Calu3 (cell line): ENCODE measurements at regions of chr17 and their contacts with region 1.

Region 1: GRCh38 chr17:45719335-45720071 is 64.6 kb upstream of the CRHR1 start:
- DNase-seq: peak; percentile 68
- H3K4me3 Mint-ChIP-seq: no peak overlapping the region
- H3K27ac Mint-ChIP-seq: no peak overlapping the region
- H3K4me1 Mint-ChIP-seq: peaks cover 14% of the 10 kb centered on the region
- H3K27me3 Mint-ChIP-seq: peaks cover 45% of the 10 kb centered on the region
- CTCF ChIP-seq: peak; percentile 61

Region 2: DNA sequence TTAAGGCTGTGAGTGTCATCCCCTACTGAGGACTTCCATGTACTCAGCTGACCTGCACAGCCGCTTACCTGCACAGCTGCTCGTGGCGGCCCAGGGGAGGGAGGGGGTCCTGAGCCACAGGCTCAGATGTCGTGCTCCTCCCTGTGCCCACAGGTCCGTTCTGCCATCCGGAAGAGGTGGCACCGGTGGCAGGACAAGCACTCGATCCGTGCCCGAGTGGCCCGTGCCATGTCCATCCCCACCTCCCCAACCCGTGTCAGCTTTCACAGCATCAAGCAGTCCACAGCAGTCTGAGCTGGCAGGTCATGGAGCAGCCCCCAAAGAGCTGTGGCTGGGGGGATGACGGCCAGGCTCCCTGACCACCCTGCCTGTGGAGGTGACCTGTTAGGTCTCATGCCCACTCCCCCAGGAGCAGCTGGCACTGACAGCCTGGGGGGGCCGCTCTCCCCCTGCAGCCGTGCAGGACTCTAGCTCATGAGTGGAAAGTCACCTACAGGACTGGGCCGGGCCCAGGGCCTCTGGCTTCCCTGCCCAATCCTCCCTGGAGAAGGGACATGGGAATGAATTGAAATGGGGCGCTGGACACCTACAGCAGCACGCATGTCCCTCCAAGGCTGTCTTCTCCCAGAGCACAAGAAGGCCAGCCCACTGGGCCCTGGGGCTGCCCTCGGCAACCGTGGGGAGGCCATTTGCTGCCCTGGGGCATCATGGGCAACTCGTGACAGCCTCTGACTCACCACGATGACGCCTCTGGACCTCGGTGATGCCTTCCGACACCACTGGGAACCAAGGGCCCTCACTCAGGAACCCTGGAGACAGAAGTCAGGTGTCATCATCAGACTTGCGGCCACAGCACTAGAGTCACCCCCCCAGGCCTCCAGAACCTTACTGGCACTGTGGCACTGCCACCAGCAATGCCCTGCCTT is 115.2 kb after region 1 on chr17:
- CTCF ChIA-PET with region 1: interaction called, 7 read pairs
- intact Hi-C with region 1: loop called (anchors 5 kb)
- DNase-seq: no peak
- H3K4me3 Mint-ChIP-seq: no peak overlapping the region
- H3K27ac Mint-ChIP-seq: no peak overlapping the region
- H3K4me1 Mint-ChIP-seq: no peaks in the 10 kb centered on the region
- H3K27me3 Mint-ChIP-seq: peaks cover 89% of the 10 kb centered on the region
- CTCF ChIP-seq: no peak

Region 3: DNA sequence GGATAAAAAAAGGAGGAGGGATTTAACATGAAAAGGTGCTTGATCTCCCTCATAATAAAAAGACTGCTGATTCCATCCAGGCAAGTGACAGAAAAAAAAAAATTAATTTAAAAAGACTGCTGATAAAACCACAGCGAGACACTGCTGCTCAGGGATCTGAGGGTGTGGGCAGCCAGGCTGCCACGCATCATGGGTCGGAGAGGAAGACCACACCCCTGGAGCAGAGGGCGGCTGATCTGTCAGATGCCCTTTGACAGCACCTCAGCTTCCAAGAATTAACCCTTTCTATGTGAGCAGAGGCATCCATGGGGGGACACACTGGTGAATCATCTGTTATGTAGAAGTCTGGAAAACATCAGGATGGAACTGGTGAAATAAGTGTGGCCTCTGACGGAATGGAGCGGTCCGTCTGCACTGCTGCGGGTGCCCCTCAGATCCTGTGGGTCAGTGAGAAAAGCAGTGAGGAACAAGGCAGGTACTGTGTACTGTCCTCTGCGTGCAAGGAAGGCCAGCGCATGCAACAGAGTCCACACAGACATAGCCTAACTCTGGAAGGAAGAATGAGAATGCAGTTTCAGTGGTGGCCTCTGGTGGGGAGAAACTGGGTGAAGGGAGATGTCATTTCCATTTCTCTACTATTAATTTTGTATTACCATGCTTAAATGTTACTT is 194.7 kb after region 1 on chr17:
- CTCF ChIA-PET with region 1: no interaction called
- intact Hi-C with region 1: no loop called
- DNase-seq: no peak
- H3K4me3 Mint-ChIP-seq: no peak overlapping the region
- H3K27ac Mint-ChIP-seq: no peak overlapping the region
- H3K4me1 Mint-ChIP-seq: peaks cover 11% of the 10 kb centered on the region
- H3K27me3 Mint-ChIP-seq: peaks cover 93% of the 10 kb centered on the region
- CTCF ChIP-seq: no peak